Heart right ventricle (tissue), 16 donors: ENCODE measurements at regions of chr12 and their contacts with region 1.

Region 1: DNA sequence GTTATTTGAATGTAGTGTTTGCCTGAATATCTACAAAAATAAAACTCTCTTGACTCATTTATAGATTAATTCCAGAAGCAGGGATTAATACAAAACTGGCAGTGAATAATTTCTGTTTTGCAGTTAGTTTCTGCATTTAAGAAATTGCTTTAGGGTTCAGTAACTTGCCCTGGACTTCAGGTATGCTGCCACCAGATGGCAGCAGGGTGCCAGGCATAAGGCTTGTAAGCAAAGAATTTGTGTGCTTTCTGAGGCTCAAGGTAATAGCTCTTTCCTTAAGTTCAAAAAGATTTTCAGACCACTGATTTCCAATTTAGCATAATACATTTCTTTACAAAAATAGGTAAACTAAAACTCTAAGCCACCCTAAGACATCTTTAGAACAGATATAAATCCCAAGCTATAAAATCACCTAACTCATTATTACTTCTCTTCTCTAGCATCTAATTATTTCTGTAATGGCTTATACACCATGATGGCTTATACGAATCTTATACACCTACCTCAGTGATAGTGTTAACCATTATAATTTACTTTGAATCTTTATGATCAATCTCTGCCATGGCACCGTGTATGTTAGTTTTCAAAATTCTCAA is 398.3 kb downstream of the APAF1 start:
- DNase-seq: peak; percentile 36 to 57
- ATAC-seq: no peak
- H3K4me3 ChIP-seq: no peak overlapping the region
- H3K27ac ChIP-seq: no peak overlapping the region
- H3K4me1 ChIP-seq: no peaks in the 10 kb centered on the region
- H3K27me3 ChIP-seq: no peaks in the 10 kb centered on the region
- CTCF ChIP-seq: peak; percentile 56 to 93 (median 84)

Region 2: DNA sequence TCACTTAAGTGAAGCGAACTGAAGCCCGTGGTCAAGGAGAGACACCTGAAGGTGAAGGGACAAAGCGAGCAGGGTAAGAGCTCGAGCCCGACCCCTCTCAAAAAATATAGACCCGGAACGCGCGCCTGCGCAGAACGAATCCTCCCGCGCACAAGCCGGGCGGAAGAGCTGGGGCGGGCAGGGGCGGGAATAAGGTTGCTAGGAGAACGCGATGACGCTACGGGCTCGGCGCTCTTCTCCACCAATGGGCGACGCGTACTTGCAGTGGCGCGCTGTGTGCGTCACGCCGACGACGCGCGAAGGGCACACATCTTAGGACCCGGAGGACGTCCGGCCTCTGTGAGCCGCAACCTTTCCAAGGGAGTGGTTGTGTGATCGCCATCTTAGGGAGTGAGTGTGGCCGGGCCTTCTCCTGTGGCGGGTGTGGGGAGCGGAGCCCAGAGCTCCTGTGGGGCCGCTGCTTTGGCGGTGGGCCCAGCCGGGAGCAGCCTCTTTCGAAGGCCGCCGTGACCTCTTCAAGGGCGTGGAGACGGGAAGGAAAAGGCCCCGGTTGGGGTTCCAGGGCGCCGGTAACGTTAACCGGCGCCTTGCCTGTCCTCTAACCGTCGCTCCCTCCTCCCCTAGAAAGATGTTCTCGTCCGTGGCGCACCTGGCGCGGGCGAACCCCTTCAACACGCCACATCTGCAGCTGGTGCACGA is 449.9 kb before region 1 on chr12 and contains the start of gene SLC25A3:
- intact Hi-C with region 1: no loop called
- DNase-seq: peak; percentile 97
- ATAC-seq: peak; percentile 99
- H3K4me3 ChIP-seq: peak within 1 kb of the TSS; percentile 76 to 99 (median 91)
- H3K27ac ChIP-seq: peak within 1 kb of the TSS; percentile 97 to 100 (median 99)
- H3K4me1 ChIP-seq: peaks cover 14 to 41% (median 27%) of the 10 kb centered on the region in 9 donors
- H3K27me3 ChIP-seq: no peaks in the 10 kb centered on the region
- CTCF ChIP-seq: no peak
- total RNA-seq, gene SLC25A3: 1,098 to 2,142 (median 1,719) TPM

Region 3: DNA sequence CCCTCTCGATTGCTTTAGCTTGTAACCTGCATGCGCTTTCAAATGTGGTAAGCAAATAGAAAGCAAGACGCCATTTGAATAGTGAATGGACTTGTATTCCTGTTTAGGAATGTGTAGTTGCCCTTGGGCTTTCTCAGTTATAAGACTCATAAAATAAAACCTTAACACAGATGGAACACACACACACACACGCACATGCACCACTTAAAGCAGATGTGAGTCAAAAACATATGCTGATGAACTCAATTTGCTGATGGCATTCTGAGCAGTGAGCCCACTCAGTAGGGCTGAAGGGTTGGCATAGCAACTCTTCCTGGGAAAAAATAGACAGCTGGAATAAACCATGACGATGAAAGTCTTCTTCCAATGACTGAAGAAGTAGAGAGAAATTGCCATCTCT is 37.8 kb before region 1 on chr12:
- intact Hi-C with region 1: no loop called
- DNase-seq: no peak
- ATAC-seq: no peak
- H3K4me3 ChIP-seq: no peak overlapping the region
- H3K27ac ChIP-seq: no peak overlapping the region
- H3K4me1 ChIP-seq: no peaks in the 10 kb centered on the region
- H3K27me3 ChIP-seq: peaks cover 0 to 4% (median 0%) of the 10 kb centered on the region in 7 donors
- CTCF ChIP-seq: no peak

Region 4: DNA sequence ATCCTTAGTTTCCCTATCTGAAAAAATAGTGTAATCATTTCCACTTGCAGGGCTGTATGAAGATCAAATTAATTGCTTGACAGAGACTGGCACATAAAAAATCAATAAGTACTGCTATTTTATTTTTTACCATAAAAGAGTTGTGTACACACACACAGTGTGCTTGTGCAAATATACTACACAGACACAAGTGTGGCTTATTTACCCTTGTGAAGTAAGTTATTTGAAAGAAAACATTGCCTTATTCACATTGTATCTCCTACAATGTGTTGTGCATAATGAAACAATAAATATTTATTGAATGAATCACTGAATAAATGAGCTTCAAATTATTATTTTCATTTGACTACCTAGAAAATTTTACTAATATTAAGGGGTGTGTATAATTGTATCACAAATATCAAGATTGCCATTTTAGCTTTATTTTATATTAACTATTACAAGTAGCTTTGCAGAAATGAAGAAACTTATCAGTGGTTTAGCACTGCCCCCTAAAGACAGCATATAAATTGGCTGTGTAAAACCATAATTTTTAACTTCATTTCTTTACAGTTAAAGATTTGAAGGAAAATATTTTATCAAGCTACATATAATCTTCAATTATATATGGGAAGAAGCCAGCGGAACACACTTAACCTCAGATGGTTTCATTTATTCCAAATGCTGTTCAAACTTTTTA is 615.4 kb after region 1 on chr12:
- intact Hi-C with region 1: loop called in 4 of 10 experiments (anchors 10 kb)
- DNase-seq: no peak
- ATAC-seq: no peak
- H3K4me3 ChIP-seq: no peak overlapping the region
- H3K27ac ChIP-seq: no peak overlapping the region
- H3K4me1 ChIP-seq: no peaks in the 10 kb centered on the region
- H3K27me3 ChIP-seq: no peaks in the 10 kb centered on the region
- CTCF ChIP-seq: peak in 6 of 9 donors; percentile 14 to 47 (median 30)